Mammary epithelial cell (primary cell): ENCODE measurements at regions of chr14 and their contacts with region 1.

Region 1: DNA sequence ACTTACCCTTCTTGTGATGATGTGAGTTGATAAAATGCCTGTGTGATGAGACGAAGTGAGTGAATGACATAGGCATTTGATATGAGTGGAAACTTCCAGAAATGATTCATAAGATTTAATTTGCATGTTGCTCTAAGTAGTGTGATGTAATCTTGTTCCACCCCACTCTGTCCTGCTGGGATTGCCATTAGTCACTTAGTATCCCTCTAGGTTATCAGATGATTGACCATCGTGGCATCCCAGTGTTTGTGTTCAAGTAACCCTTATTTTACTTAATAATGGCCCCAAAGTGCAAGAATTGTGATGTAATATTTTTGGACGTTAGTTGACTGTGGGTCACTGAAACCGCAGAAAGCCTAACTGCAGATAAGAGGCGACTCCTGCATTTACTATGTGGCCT is 214.4 kb upstream of the DIO2 start:
- DNase-seq: peak; percentile 91
- H3K4me3 ChIP-seq: no peak overlapping the region
- H3K27ac ChIP-seq: peak overlapping the region; percentile 67
- H3K4me1 ChIP-seq: peaks cover 15% of the 10 kb centered on the region
- H3K27me3 ChIP-seq: no peaks in the 10 kb centered on the region
- CTCF ChIP-seq: no peak

Region 2: GRCh38 chr14:80389026-80389890 is 36.4 kb before region 1 on chr14:
- CTCF ChIA-PET with region 1: no interaction called
- dilution Hi-C with region 1: loop called (anchors 5 kb)
- in situ Hi-C with region 1: no loop called
- intact Hi-C with region 1: loop called (anchors 1 kb)
- DNase-seq: peak; percentile 82
- H3K4me3 ChIP-seq: no peak overlapping the region
- H3K27ac ChIP-seq: peak overlapping the region; percentile 78
- H3K4me1 ChIP-seq: peaks cover 42% of the 10 kb centered on the region
- H3K27me3 ChIP-seq: no peaks in the 10 kb centered on the region
- CTCF ChIP-seq: no peak

Region 3: GRCh38 chr14:80941241-80942182 is 515.8 kb after region 1 on chr14 and contains the start of gene CEP128:
- CTCF ChIA-PET with region 1: interaction called, 3 read pairs
- dilution Hi-C with region 1: no loop called
- in situ Hi-C with region 1: no loop called
- intact Hi-C with region 1: loop called (anchors 10 kb)
- DNase-seq: peak; percentile 98
- H3K4me3 ChIP-seq: peak within 1 kb of the TSS; percentile 60 to 97 (median 62)
- H3K27ac ChIP-seq: peak within 1 kb of the TSS; percentile 75
- H3K4me1 ChIP-seq: peaks cover 26% of the 10 kb centered on the region
- H3K27me3 ChIP-seq: no peaks in the 10 kb centered on the region
- CTCF ChIP-seq: no peak
- total RNA-seq, gene CEP128: 3.3 to 23.0 TPM